Caco-2 (cell line): ENCODE measurements at regions of chr1 and their contacts with region 1.

Region 1: GRCh38 chr1:157090196-157090647 is 9.4 kb downstream of the ETV3L start:
- DNase-seq: peak; percentile 83 to 90
- H3K4me3 ChIP-seq: no peak overlapping the region
- H3K4me3 Mint-ChIP-seq: no peak overlapping the region
- H3K27ac Mint-ChIP-seq: peak overlapping the region; percentile 22
- H3K4me1 ChIP-seq: no peaks in the 10 kb centered on the region
- H3K4me1 Mint-ChIP-seq: no peaks in the 10 kb centered on the region
- H3K27me3 ChIP-seq: no peaks in the 10 kb centered on the region
- H3K27me3 Mint-ChIP-seq: no peaks in the 10 kb centered on the region
- CTCF ChIP-seq: peak; percentile 89

Region 2: GRCh38 chr1:157073944-157074767 is 16.1 kb before region 1 on chr1:
- CTCF ChIA-PET with region 1: interaction called, 13 read pairs
- POLR2A ChIA-PET with region 1: no interaction called
- intact Hi-C with region 1: no loop called
- DNase-seq: peak; percentile 75 to 77
- H3K4me3 ChIP-seq: peak overlapping the region; percentile 28
- H3K4me3 Mint-ChIP-seq: peak overlapping the region; percentile 63
- H3K27ac Mint-ChIP-seq: no peak overlapping the region
- H3K4me1 ChIP-seq: no peaks in the 10 kb centered on the region
- H3K4me1 Mint-ChIP-seq: peaks cover 8% of the 10 kb centered on the region
- H3K27me3 ChIP-seq: no peaks in the 10 kb centered on the region
- H3K27me3 Mint-ChIP-seq: no peaks in the 10 kb centered on the region
- CTCF ChIP-seq: peak; percentile 71 to 76

Region 3: DNA sequence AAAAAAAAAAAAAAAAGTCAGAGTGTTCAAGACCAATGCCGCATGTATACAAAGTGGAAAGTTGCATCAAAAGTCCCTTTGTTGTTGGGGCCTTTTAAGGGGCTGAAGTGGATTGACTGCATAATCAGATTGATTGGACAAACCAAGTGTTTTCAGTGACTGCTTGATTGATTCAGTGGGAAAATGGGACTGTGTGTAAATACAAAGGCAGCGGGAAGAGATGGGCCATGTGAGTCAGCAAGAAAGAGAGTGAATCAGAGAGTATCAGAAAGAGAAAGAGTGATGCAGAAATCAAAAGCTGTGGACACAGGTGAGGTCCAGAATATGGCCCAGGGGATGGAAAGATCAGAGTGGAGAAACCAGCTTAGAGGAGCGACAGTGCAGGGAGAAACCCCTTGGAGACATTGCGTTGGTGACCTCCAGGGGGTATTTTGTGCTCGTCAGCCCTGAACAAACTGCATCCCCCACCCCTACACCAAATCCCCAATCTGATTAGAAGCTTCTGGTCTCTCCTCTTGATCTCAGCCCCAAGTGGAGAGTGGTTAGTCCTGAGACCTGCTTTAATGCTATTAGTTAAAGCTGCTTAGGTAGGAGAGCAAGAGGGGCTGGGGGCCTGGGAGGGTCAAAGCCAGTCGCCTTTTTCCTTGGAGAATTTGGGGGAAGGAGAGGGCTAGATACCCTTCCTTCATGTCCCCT is 14.5 kb after region 1 on chr1:
- CTCF ChIA-PET with region 1: interaction called, 11 read pairs
- POLR2A ChIA-PET with region 1: no interaction called
- intact Hi-C with region 1: no loop called
- DNase-seq: no peak
- H3K4me3 ChIP-seq: no peak overlapping the region
- H3K4me3 Mint-ChIP-seq: no peak overlapping the region
- H3K27ac Mint-ChIP-seq: no peak overlapping the region
- H3K4me1 ChIP-seq: no peaks in the 10 kb centered on the region
- H3K4me1 Mint-ChIP-seq: peaks cover 7% of the 10 kb centered on the region
- H3K27me3 ChIP-seq: no peaks in the 10 kb centered on the region; the same call in 1 of the 2 replicates
- H3K27me3 Mint-ChIP-seq: peaks cover 10% of the 10 kb centered on the region
- CTCF ChIP-seq: no peak

Region 4: GRCh38 chr1:157138220-157139051 is 48.2 kb after region 1 on chr1 and contains the start of gene ETV3:
- CTCF ChIA-PET with region 1: interaction called, 41 read pairs
- POLR2A ChIA-PET with region 1: no interaction called
- intact Hi-C with region 1: loop called (anchors 2 kb)
- DNase-seq: peak; percentile 92 to 93
- H3K4me3 ChIP-seq: peak within 1 kb of the TSS; percentile 97
- H3K4me3 Mint-ChIP-seq: peak within 1 kb of the TSS; percentile 91
- H3K27ac Mint-ChIP-seq: peak within 1 kb of the TSS; percentile 87
- H3K4me1 ChIP-seq: peaks cover 39% of the 10 kb centered on the region
- H3K4me1 Mint-ChIP-seq: peaks cover 29% of the 10 kb centered on the region
- H3K27me3 ChIP-seq: no peaks in the 10 kb centered on the region
- H3K27me3 Mint-ChIP-seq: no peaks in the 10 kb centered on the region
- CTCF ChIP-seq: no peak
- total RNA-seq, gene ETV3: 25.8 and 27.5 TPM in 2 replicates

Region 5: GRCh38 chr1:157156058-157156541 is 65.9 kb after region 1 on chr1:
- CTCF ChIA-PET with region 1: interaction called, 132 read pairs
- POLR2A ChIA-PET with region 1: interaction called, 4 read pairs
- intact Hi-C with region 1: loop called (anchors 1 kb)
- DNase-seq: peak; percentile 79 to 89
- H3K4me3 ChIP-seq: peak overlapping the region; percentile 24
- H3K4me3 Mint-ChIP-seq: peak overlapping the region; percentile 77
- H3K27ac Mint-ChIP-seq: peak overlapping the region; percentile 91
- H3K4me1 ChIP-seq: peaks cover 26% of the 10 kb centered on the region
- H3K4me1 Mint-ChIP-seq: peaks cover 27% of the 10 kb centered on the region
- H3K27me3 ChIP-seq: no peaks in the 10 kb centered on the region
- H3K27me3 Mint-ChIP-seq: no peaks in the 10 kb centered on the region
- CTCF ChIP-seq: peak; percentile 92 to 97